Prostate gland (tissue), 2 donors: ENCODE measurements at regions of chr1 and their contacts with region 1.

Region 1: DNA sequence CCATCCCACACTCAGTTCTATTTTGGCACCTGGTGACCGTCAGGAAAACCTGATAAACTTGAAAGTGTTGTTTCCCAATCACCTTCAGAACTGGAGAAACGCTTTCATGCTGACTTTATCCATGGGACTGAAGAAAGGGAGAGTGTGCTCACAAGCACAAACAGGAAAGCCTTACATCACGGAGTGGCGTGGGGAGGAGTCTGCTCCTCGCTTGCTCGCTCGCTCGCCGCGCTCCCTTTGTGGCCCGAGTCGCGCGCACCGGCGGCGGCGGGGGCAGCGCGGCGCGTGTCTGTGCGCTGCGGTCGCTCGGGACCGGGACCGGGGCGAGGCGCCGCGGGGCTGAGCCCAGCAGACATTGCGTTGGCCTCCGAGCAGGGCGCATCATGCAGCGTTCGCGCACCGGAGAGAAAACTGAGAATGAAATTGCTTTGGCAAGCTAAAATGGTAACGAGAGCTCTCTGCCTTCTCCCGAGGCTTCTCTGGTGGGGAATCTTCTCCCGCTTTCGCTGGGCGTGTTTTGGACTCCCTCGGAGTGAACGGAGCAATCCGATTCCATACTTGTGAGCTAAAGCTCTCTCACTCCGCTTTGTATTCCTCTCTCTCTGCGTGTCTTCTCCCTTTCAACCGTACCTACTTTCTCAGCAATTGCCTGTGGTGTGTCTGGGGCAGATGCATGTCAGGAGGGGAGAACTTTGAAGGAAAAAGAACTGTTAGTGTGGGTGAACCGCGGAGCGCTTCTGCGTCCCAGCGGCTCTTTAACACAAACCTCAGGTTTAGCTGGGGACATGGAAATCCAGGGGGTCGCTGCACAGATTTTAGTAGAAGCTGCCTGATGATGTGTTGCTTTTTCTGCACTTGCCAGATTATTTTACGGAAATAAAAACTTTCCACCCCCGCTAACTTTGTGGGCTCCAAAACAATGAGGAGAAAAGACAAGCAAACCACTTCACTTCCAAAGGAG is at the start of gene RGL1:
- DNase-seq: peak; percentile 80
- H3K4me3 ChIP-seq: peak within 1 kb of the TSS; percentile 49 to 52
- H3K27ac ChIP-seq: peak within 1 kb of the TSS; percentile 75 to 84
- H3K4me1 ChIP-seq: peaks cover 3% of the 10 kb centered on the region
- H3K27me3 ChIP-seq: no peaks in the 10 kb centered on the region
- CTCF ChIP-seq: no peak
- POLR2A ChIP-seq: peak; percentile 79
- total RNA-seq, gene RGL1: 11.1 to 49.6 TPM

Region 2: DNA sequence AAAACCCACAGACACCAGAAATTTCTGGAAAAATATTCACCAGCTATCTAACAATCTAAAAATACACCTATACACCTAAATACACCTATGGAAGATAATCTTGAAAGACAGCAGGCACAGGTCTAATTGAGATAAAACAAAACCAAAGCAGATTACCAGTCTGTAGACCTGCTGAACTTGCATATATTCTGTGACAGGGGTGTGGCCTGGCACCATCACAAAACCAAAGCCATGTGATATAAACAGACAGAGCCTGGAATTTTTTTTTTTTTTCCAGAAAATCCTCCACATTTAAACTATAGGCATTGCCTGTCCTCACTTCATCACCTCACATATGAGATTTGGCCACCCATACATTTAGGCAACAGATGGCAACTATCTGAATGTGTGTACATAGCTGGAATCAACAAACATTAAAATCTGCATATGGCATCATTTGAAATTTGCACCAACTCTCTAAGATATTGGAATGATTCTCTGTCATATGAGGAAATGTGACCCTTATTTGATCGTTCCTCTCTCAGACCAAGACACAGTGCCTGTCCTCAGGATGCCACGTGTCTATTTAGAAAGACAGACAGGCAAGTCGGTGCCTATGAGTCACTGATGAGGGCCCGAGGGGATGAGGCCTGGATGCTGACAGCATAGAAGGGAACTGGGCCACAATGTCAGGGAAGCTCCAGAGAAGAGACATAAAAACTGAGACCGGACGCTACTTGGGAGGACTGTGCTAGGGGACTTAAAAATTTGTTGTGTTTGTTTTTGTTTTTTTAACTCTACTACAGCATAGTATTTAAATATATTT is 419.6 kb before region 1 on chr1:
- intact Hi-C with region 1: no loop called
- DNase-seq: no peak
- H3K4me3 ChIP-seq: no peak overlapping the region
- H3K27ac ChIP-seq: no peak overlapping the region
- H3K4me1 ChIP-seq: no peaks in the 10 kb centered on the region
- H3K27me3 ChIP-seq: no peaks in the 10 kb centered on the region
- CTCF ChIP-seq: no peak
- POLR2A ChIP-seq: no peak

Region 3: DNA sequence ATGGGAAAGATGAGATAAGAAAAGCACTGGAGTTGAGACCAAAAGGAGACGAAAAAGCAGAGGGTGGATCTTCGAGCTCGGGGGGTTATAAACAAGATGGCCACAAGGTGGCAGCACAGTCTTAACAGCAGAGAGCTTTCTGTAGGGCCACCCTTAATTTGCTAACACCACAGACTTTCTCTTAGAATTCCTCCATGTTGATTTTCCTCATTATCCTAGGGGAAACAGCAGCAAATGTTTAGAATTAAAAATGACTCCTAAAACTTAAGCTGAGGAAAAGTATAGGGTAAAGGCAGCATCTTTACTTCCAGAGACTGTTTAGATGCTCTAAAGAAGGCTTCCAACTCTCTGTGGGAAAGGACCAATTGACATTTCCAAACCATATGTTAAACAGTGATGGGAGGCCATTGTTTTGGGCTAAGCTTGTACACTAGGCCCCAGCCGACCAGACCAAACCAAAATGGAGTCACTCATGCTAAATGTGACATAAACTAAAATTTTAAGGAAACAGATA is 149.5 kb before region 1 on chr1:
- intact Hi-C with region 1: loop called (anchors 10 kb)
- DNase-seq: peak; percentile 80
- H3K4me3 ChIP-seq: no peak overlapping the region
- H3K27ac ChIP-seq: no peak overlapping the region
- H3K4me1 ChIP-seq: no peaks in the 10 kb centered on the region
- H3K27me3 ChIP-seq: no peaks in the 10 kb centered on the region
- CTCF ChIP-seq: peak; percentile 72 to 98 (median 87)
- POLR2A ChIP-seq: no peak

Region 4: DNA sequence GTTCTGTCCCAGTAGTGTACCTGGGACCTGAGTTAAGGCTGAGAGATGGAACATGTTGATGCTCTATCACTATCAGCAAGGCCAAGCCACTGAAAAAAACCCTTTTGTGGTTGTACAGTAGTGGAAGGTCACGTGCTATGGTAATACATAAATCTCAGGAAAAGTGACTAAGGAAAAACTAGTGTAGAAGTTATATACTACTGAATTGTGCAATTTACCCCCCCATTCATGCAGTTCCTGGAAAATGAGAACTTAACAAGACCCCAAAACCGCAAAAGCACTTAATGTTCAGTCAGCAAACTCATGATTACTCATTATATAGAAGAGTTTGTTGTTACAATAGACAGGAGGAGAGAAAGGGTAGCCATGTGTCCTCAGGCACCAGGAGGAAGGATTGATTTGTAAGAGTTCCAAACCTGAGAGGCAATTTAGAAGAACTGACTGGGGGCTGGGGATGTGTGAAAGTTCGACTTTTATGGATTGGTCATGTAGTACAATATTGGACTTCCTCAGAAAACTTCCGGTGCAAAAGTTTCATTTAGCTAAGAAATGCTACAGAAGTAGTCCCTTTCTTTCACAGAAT is 91.4 kb after region 1 on chr1:
- intact Hi-C with region 1: loop called (anchors 5 kb)
- DNase-seq: no peak
- H3K4me3 ChIP-seq: no peak overlapping the region
- H3K27ac ChIP-seq: peak overlapping the region in 1 of 2 donors; percentile 19
- H3K4me1 ChIP-seq: peaks cover 4% of the 10 kb centered on the region
- H3K27me3 ChIP-seq: no peaks in the 10 kb centered on the region
- CTCF ChIP-seq: no peak
- POLR2A ChIP-seq: no peak